Transverse colon (tissue), 4 donors: ENCODE measurements at regions of chr17 and their contacts with region 1.

Region 1: DNA sequence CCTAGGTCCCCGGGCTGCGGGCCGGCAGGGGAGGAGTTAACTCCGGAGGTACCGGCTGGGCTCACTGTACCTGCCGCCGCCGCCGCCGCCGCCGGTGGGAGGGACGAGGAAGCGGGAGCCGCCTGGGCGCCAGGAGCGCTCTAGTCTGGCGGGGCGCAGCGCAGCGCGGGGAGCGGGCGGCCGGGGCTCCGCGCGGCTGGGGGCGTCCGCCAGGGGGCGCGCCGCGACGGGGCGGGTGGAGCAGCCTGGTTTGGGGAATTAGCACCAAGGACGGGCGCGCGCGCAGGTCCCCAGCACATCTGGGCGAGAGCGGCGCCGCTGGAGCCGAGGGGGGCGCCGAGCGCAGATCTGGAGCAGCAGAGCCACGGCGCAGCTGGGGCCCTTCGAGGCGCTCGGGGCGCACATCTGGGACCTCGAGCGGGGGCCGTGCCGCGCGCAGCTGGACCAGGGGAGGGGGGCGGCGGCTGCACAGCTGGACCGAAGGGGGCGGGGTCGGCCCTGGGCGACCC is at the start of gene NXPH3:
- DNase-seq: peak; percentile 74
- H3K4me3 ChIP-seq: peak within 1 kb of the TSS; percentile 51 to 71 (median 62)
- H3K27ac ChIP-seq: peak within 1 kb of the TSS; percentile 71 to 92 (median 82)
- H3K4me1 ChIP-seq: peaks cover 0 to 34% (median 28%) of the 10 kb centered on the region in 4 donors
- H3K27me3 ChIP-seq: peaks cover 45% of the 10 kb centered on the region
- CTCF ChIP-seq: peak in 3 of 5 experiments; percentile 33 to 58 (median 54)
- EP300 ChIP-seq: no peak
- POLR2A ChIP-seq: no peak
- total RNA-seq, gene NXPH3: 0.20 to 4.6 (median 2.6) TPM

Region 2: GRCh38 chr17:49616601-49617131 is 41.0 kb after region 1 on chr17:
- in situ Hi-C with region 1: no loop called
- intact Hi-C with region 1: no loop called
- DNase-seq: peak; percentile 38
- H3K4me3 ChIP-seq: no peak overlapping the region
- H3K27ac ChIP-seq: peak overlapping the region; percentile 57 to 80 (median 68)
- H3K4me1 ChIP-seq: peaks cover 13 to 36% (median 19%) of the 10 kb centered on the region in 4 donors
- H3K27me3 ChIP-seq: no peaks in the 10 kb centered on the region
- CTCF ChIP-seq: no peak
- EP300 ChIP-seq: no peak
- POLR2A ChIP-seq: no peak

Region 3: GRCh38 chr17:49637050-49637449 is 61.4 kb after region 1 on chr17:
- in situ Hi-C with region 1: no loop called
- intact Hi-C with region 1: loop called (anchors 10 kb)
- DNase-seq: no peak
- H3K4me3 ChIP-seq: no peak overlapping the region
- H3K27ac ChIP-seq: peak overlapping the region in 3 of 4 donors; percentile 31 to 84 (median 78)
- H3K4me1 ChIP-seq: peaks cover 5 to 53% (median 19%) of the 10 kb centered on the region in 4 donors
- H3K27me3 ChIP-seq: no peaks in the 10 kb centered on the region
- CTCF ChIP-seq: no peak
- EP300 ChIP-seq: no peak
- POLR2A ChIP-seq: no peak

Region 4: GRCh38 chr17:49694847-49695683 is 119.4 kb after region 1 on chr17:
- in situ Hi-C with region 1: loop called (anchors 5 to 10 kb)
- intact Hi-C with region 1: loop called (anchors 2 kb)
- DNase-seq: peak; percentile 72
- H3K4me3 ChIP-seq: no peak overlapping the region
- H3K27ac ChIP-seq: peak overlapping the region in 1 of 4 donors; percentile 6
- H3K4me1 ChIP-seq: peaks cover 0 to 24% (median 10%) of the 10 kb centered on the region in 4 donors
- H3K27me3 ChIP-seq: no peaks in the 10 kb centered on the region
- CTCF ChIP-seq: peak; percentile 91 to 96 (median 93)
- EP300 ChIP-seq: no peak
- POLR2A ChIP-seq: no peak

Region 5: GRCh38 chr17:49730078-49730784 is 154.6 kb after region 1 on chr17:
- in situ Hi-C with region 1: no loop called
- intact Hi-C with region 1: no loop called
- DNase-seq: peak; percentile 59
- H3K4me3 ChIP-seq: no peak overlapping the region
- H3K27ac ChIP-seq: peak overlapping the region; percentile 65 to 79 (median 69)
- H3K4me1 ChIP-seq: peaks cover 6 to 32% (median 12%) of the 10 kb centered on the region in 4 donors
- H3K27me3 ChIP-seq: no peaks in the 10 kb centered on the region
- CTCF ChIP-seq: no peak
- EP300 ChIP-seq: no peak
- POLR2A ChIP-seq: no peak

Region 6: DNA sequence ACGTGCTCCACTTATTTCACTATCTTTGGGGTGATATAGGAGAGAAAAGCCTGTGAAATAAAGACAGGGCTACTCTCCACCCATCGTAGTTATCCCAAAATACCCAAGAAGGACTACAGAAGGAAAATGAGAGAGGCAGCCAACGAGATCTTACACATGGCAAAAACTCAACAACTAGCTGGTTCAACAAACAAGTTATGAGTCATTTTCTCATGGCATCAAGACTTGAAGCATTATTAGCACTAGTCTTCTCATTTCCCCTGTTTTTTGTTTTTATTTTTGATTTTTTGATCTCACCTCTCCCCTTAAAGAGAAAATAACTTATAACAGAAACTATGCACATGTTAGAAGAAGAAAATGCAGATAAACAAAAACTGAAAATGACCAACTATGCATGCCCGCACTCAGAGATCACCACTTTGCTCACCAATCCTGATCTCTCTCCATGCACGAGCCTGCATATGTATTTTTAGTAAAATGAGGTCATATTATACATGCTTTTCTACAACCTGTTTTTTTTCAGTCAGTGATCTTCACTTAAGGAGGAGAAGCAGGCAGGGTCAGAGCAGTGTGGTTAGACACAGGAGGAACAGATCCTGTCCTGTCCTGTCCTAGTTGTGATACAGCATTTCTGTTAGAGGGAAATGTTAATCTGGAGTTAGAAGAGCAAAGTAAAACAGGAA is 165.5 kb after region 1 on chr17:
- in situ Hi-C with region 1: no loop called
- intact Hi-C with region 1: no loop called
- DNase-seq: no peak
- H3K4me3 ChIP-seq: peak overlapping the region in 1 of 4 donors; percentile 10
- H3K27ac ChIP-seq: peak overlapping the region; percentile 81 to 86 (median 82)
- H3K4me1 ChIP-seq: peaks cover 27 to 79% (median 44%) of the 10 kb centered on the region in 4 donors
- H3K27me3 ChIP-seq: no peaks in the 10 kb centered on the region
- CTCF ChIP-seq: no peak
- EP300 ChIP-seq: no peak
- POLR2A ChIP-seq: no peak

Region 7: DNA sequence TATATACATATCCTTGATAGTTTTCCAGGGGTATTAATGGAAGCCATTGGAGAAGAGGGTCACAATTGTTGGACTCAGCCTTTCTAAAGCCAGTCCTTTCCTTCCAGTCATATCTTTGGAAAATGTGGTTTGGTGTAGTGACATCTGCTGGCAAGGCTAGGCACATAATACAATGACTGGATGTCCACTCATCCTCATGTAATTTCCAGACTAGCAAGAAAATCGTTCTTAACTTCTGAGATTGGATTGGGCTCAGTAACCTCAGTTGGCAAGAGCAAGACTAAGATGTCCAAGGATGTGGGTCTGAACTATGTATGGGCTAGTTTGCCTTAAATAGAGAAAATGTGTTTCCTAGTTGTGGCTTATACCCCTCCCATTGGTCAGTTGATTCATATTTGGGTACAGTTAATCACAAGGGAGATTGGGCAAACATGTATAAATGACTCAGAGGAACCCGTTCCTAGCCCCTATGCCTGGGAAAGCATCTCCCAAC is 204.2 kb after region 1 on chr17:
- in situ Hi-C with region 1: loop called in 1 of 4 experiments (anchors 5 kb)
- intact Hi-C with region 1: loop called (anchors 2 kb)
- DNase-seq: peak; percentile 28
- H3K4me3 ChIP-seq: no peak overlapping the region
- H3K27ac ChIP-seq: peak overlapping the region in 3 of 4 donors; percentile 17 to 30 (median 27)
- H3K4me1 ChIP-seq: peaks cover 0 to 47% (median 7%) of the 10 kb centered on the region in 4 donors
- H3K27me3 ChIP-seq: no peaks in the 10 kb centered on the region
- CTCF ChIP-seq: peak; percentile 40 to 62 (median 47)
- EP300 ChIP-seq: no peak
- POLR2A ChIP-seq: no peak